ENCODE measurements at regions of chr18 and their contacts with region 1.

Region 1: GRCh38 chr18:12990967-12991838 is at the start of gene CEP192:
- DNase-seq: peak; percentile 95 to 98 (median 98)
- H3K4me3 ChIP-seq: peak within 1 kb of the TSS; percentile 78
- H3K4me3 Mint-ChIP-seq: peak within 1 kb of the TSS; percentile 93 to 100 (median 97)
- H3K27ac ChIP-seq: peak within 1 kb of the TSS; percentile 79
- H3K27ac Mint-ChIP-seq: peak within 1 kb of the TSS; percentile 86 to 97 (median 94)
- H3K4me1 ChIP-seq: peaks cover 42% of the 10 kb centered on the region
- H3K4me1 Mint-ChIP-seq: peaks cover 15 to 20% (median 16%) of the 10 kb centered on the region in 3 donors
- H3K27me3 ChIP-seq: no peaks in the 10 kb centered on the region
- H3K27me3 Mint-ChIP-seq: no peaks in the 10 kb centered on the region
- total RNA-seq, gene CEP192: 21.9 to 24.3 TPM

Region 2: GRCh38 chr18:12947355-12948041 is 43.7 kb before region 1 on chr18 and contains the start of gene SEH1L:
- CTCF ChIA-PET with region 1: interaction called, 5 read pairs
- POLR2A ChIA-PET with region 1: interaction called, 11 read pairs
- DNase-seq: peak; percentile 97 to 100 (median 98)
- H3K4me3 ChIP-seq: peak within 1 kb of the TSS; percentile 84
- H3K4me3 Mint-ChIP-seq: peak within 1 kb of the TSS; percentile 90 to 96 (median 94)
- H3K27ac ChIP-seq: peak within 1 kb of the TSS; percentile 90
- H3K27ac Mint-ChIP-seq: peak within 1 kb of the TSS; percentile 94 to 100 (median 98)
- H3K4me1 ChIP-seq: peaks cover 32% of the 10 kb centered on the region
- H3K4me1 Mint-ChIP-seq: peaks cover 22 to 40% (median 37%) of the 10 kb centered on the region in 3 donors
- H3K27me3 ChIP-seq: no peaks in the 10 kb centered on the region
- H3K27me3 Mint-ChIP-seq: peaks cover 0 to 9% of the 10 kb centered on the region in 2 donors
- total RNA-seq, gene SEH1L: 132 to 141 TPM

Region 3: DNA sequence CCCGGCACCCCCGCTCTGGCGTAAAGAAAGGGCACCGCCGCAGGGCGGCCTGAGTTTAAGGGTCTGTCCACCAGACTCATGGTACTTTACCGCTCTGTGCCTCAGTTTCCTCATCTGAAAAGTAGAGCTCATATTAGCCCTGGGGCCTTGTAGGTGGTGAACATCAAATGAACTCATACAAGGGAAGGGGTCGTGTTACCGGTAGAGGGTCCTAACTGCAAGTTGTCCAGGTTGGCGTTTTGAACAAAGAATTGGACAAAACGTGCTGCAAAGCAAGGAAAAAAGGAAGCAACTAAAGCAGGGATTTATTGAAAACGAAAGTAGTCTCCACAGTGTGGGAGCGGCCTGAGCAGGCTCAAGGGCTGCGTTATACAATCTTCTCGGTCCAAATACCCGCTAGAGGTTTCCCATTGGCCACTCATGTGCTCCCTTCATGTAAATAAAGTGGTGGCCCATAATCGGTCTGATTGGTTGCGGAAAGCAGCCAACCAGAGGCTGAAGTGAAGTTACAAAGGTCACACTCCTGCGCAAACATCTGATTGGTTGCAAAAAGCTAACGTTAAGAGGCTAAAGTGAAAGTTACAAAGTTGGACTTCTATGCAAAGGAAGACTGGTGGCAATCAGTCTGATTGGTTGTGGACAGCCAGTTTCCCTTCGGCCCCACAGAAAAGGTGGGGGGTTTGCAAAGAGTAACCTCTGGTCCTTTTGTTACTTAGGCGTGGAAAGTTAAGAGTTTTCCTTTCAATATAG is 146.6 kb after region 1 on chr18:
- CTCF ChIA-PET with region 1: no interaction called
- POLR2A ChIA-PET with region 1: interaction called, 11 read pairs
- DNase-seq: peak; percentile 26 to 84 (median 71)
- H3K4me3 ChIP-seq: peak overlapping the region; percentile 80
- H3K4me3 Mint-ChIP-seq: peak overlapping the region; percentile 92 to 99 (median 98)
- H3K27ac ChIP-seq: peak overlapping the region; percentile 45
- H3K27ac Mint-ChIP-seq: peak overlapping the region; percentile 94 to 99 (median 95)
- H3K4me1 ChIP-seq: peaks cover 10% of the 10 kb centered on the region
- H3K4me1 Mint-ChIP-seq: peaks cover 26 to 33% (median 31%) of the 10 kb centered on the region in 3 donors
- H3K27me3 ChIP-seq: no peaks in the 10 kb centered on the region
- H3K27me3 Mint-ChIP-seq: peaks cover 0 to 12% of the 10 kb centered on the region in 2 donors